CD14-positive monocyte (primary cell): ENCODE measurements at regions of chr6 and their contacts with region 1.

Region 1: GRCh38 chr6:34055223-34055933 is 90.5 kb downstream of the GRM4 start:
- DNase-seq: peak; percentile 24 to 38 (median 28)
- H3K4me3 ChIP-seq: no peak overlapping the region
- H3K4me3 Mint-ChIP-seq: no peak overlapping the region
- H3K27ac ChIP-seq: no peak overlapping the region
- H3K27ac Mint-ChIP-seq: no peak overlapping the region
- H3K4me1 ChIP-seq: no peaks in the 10 kb centered on the region
- H3K4me1 Mint-ChIP-seq: no peaks in the 10 kb centered on the region
- H3K27me3 ChIP-seq: no peaks in the 10 kb centered on the region
- H3K27me3 Mint-ChIP-seq: peaks cover 7 to 11% (median 10%) of the 10 kb centered on the region in 3 donors
- CTCF ChIP-seq: peak; percentile 82

Region 2: DNA sequence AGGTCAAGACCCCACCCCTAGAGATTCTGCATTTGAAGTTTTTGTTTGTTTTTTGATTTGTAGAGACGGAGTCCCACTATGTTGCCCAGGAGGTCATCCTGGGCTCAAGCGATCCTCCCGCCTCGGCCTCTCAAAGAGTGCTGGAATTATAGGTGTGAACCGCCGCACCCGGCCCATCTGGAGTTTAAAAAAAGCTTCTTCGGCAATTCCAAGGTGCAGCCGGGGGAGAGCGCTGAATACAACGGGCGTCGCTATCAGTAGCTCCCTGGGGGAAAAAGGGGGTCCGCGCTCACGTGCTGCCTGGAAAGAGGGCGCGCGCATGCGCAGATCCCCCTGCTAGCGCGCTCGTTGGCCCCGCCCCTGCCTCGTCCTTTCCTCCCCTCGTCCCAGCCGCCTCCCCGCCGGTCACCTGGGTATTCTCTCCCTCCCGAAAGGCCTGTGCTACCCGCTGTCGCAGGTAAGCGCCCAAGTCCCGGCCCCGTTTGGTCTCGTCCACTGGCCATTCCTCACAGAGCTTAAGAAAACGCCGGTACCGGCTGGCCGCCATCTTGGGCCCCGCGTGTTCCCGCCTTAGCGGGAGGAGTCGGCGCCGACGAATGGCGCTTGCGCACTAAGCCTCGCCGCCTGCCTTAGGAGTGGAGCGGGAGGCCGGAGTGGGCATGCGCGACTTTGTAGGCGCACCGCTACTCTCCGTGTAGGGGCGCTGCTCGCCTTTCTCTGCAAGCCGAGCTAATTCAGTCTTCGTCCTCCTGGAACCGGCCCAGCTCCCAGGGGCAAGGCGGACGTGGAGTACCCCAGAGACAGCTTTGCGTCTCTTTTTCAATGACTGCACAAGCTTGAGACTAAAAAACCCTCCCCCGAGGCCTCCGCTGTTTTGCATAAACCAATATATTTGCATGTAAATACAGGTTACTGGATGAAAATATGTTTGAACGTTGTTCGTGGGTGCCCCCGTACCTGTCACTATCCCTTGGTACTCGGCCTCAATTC is 343.9 kb before region 1 on chr6 and contains the start of gene UQCC2:
- intact Hi-C with region 1: no loop called
- DNase-seq: peak; percentile 96 to 98 (median 96)
- H3K4me3 ChIP-seq: peak within 1 kb of the TSS; percentile 60 to 97 (median 92)
- H3K4me3 Mint-ChIP-seq: peak within 1 kb of the TSS; percentile 95 to 97
- H3K27ac ChIP-seq: peak within 1 kb of the TSS; percentile 73 to 89
- H3K27ac Mint-ChIP-seq: peak within 1 kb of the TSS; percentile 86 to 99 (median 95)
- H3K4me1 ChIP-seq: peaks cover 13 to 16% of the 10 kb centered on the region in 2 donors
- H3K4me1 Mint-ChIP-seq: peaks cover 14% of the 10 kb centered on the region
- H3K27me3 ChIP-seq: no peaks in the 10 kb centered on the region
- H3K27me3 Mint-ChIP-seq: peaks cover 0 to 4% (median 2%) of the 10 kb centered on the region in 3 donors
- CTCF ChIP-seq: peak; percentile 59
- polyA plus RNA-seq, gene UQCC2: 10.3 to 39.3 (median 37.2) TPM

Region 3: GRCh38 chr6:33926451-33926850 is 128.9 kb before region 1 on chr6:
- intact Hi-C with region 1: no loop called
- DNase-seq: no peak
- H3K4me3 ChIP-seq: no peak overlapping the region
- H3K4me3 Mint-ChIP-seq: no peak overlapping the region
- H3K27ac ChIP-seq: no peak overlapping the region
- H3K27ac Mint-ChIP-seq: no peak overlapping the region
- H3K4me1 ChIP-seq: no peaks in the 10 kb centered on the region
- H3K4me1 Mint-ChIP-seq: no peaks in the 10 kb centered on the region
- H3K27me3 ChIP-seq: no peaks in the 10 kb centered on the region
- H3K27me3 Mint-ChIP-seq: peaks cover 2 to 9% (median 8%) of the 10 kb centered on the region in 3 donors
- CTCF ChIP-seq: no peak

Region 4: DNA sequence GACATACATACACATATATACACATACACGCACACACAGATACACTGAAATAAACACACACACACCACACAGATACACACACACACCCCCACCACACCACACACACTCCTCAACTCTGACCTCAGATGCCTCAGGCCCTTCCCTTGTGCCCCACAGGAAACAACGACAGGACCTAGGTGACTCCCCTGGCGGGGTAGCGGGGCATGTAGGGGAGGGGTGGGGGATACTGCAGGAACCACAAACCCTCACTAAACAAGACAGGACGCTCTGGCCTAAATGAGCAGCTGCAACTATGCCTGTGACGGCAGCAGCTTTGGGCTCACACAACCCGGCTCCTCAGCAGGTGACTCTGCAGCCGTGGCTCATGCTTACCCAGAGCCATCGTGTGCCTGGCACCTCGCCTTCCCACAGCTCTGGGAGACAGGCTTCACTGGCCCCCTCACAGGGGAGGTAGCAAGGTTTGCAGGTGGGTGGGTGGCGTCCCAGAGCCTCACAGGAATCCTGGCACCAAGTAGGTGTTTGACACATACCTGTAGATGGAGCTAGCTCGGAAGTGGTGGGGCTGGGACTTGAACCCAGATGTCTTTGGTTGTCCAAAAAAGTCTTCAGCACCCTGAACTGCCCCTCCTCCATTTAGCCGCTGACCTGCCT is 10.3 kb before region 1 on chr6:
- intact Hi-C with region 1: no loop called
- DNase-seq: no peak
- H3K4me3 ChIP-seq: no peak overlapping the region
- H3K4me3 Mint-ChIP-seq: no peak overlapping the region
- H3K27ac ChIP-seq: no peak overlapping the region
- H3K27ac Mint-ChIP-seq: no peak overlapping the region
- H3K4me1 ChIP-seq: no peaks in the 10 kb centered on the region
- H3K4me1 Mint-ChIP-seq: no peaks in the 10 kb centered on the region
- H3K27me3 ChIP-seq: no peaks in the 10 kb centered on the region
- H3K27me3 Mint-ChIP-seq: peaks cover 3 to 22% (median 9%) of the 10 kb centered on the region in 3 donors
- CTCF ChIP-seq: no peak

Region 5: DNA sequence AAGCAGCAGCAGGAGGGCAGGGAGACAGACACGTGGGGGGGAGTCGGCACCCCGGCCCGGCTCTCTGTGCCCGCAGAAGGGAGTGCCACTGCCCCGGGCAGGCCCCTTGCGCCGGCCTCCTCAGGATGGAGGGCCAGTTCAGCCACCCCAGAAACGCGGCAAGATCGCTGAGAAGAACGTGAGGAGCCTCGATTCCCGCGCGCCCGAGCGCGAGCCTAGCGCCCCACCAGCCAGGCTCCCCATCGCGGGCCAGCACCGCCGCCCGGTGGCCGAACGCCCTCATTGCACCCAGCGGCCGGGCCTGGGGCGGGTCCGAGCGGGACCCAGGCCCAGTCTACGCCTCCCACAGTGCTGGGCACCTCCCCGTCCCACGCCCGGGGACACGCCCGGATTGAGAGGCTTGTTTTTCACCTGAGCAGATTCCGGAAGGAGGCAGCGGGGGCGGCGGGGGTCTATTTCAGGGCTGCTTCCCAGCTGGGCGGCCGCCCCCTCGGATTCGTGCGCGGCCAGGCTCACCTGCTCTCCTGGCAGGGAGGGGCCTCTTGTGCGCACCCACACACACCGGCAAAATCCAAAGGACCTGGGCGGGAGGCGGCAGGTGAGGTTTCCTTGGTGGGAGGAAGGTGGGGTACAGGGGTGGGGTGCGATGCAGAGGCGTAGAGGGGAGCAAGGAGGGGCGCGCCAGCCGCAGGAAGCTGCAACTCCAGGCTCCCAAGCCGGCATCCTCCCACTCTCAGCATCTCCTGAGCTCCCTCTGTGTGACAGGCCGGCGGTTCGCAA is 99.5 kb after region 1 on chr6:
- intact Hi-C with region 1: loop called in 1 of 2 experiments (anchors 5 kb)
- DNase-seq: peak in 2 of 3 donors; percentile 9 to 18
- H3K4me3 ChIP-seq: peak overlapping the region in 1 of 3 experiments; percentile 40
- H3K4me3 Mint-ChIP-seq: peak overlapping the region in 1 of 2 donors; percentile 77
- H3K27ac ChIP-seq: no peak overlapping the region
- H3K27ac Mint-ChIP-seq: no peak overlapping the region
- H3K4me1 ChIP-seq: peaks cover 0 to 9% of the 10 kb centered on the region in 2 donors
- H3K4me1 Mint-ChIP-seq: peaks cover 4% of the 10 kb centered on the region
- H3K27me3 ChIP-seq: peaks cover 4 to 64% of the 10 kb centered on the region in 2 donors
- H3K27me3 Mint-ChIP-seq: peaks cover 42 to 80% (median 63%) of the 10 kb centered on the region in 3 donors
- CTCF ChIP-seq: peak; percentile 94